IMR-90 (cell line): ENCODE measurements at regions of chr1 and their contacts with region 1.

Region 1: DNA sequence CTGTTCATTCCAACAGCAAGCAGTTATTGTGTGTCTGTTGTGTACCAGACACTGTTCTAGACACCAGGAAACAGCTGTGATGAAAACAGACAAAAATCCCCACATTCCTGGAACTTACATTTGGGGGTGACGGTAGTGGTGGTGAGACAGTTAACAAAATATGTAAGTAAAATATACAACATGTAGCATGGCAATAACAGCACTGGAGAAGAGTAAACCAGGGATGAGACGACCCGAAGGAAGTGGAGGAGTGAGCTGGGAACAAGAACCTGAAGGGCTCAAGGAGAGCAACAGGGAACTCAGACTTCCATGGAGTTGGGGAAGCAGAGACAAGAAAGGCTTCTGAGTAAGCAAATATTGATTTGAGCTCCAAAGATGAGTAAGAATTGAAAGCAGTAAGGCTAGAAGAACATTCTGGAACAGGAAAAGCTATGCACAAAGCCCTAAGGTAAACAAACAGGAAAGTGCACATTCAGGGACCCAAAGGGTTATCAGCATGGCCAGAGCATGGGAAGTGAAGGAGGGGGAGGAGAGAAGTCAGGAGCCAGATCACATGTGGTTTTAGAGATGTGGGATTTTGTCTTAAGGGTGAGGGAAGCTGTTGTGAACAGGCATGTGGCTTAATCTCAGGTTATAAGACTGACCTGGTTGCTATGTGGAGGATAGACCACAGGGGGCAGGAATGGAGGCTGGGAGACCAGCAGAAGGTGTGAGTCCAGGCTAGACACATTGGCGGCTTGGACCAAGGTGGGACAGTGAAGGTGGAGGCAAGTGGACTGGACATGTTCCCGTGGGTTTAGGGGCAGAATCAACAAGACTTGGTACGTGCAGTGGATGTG is 7.3 kb downstream of the CSF1 start:
- DNase-seq: peak; percentile 81
- ATAC-seq: peak; percentile 81
- H3K4me3 ChIP-seq: no peak overlapping the region
- H3K27ac ChIP-seq: peak overlapping the region; percentile 64
- H3K4me1 ChIP-seq: peaks cover 24% of the 10 kb centered on the region
- H3K27me3 ChIP-seq: no peaks in the 10 kb centered on the region
- CTCF ChIP-seq: no peak
- POLR2A ChIP-seq: no peak
- RAD21 ChIP-seq: 0 out of 2 replicates have a peak, but pooled peaks have one; percentile 5

Region 2: GRCh38 chr1:109979489-109980091 is 61.6 kb after region 1 on chr1:
- CTCF ChIA-PET with region 1: interaction called, 21 read pairs
- POLR2A ChIA-PET with region 1: interaction called, 3 read pairs
- dilution Hi-C with region 1: no loop called
- in situ Hi-C with region 1: loop called (anchors 5 kb)
- intact Hi-C with region 1: loop called (anchors 2 kb)
- DNase-seq: peak; percentile 71
- ATAC-seq: peak; percentile 22
- H3K4me3 ChIP-seq: no peak overlapping the region
- H3K27ac ChIP-seq: peak overlapping the region; percentile 91
- H3K4me1 ChIP-seq: peaks cover 32% of the 10 kb centered on the region
- H3K27me3 ChIP-seq: no peaks in the 10 kb centered on the region
- CTCF ChIP-seq: no peak
- POLR2A ChIP-seq: no peak
- RAD21 ChIP-seq: no peak